ENCODE measurements at regions of chr7 and their contacts with region 1.

Region 1: DNA sequence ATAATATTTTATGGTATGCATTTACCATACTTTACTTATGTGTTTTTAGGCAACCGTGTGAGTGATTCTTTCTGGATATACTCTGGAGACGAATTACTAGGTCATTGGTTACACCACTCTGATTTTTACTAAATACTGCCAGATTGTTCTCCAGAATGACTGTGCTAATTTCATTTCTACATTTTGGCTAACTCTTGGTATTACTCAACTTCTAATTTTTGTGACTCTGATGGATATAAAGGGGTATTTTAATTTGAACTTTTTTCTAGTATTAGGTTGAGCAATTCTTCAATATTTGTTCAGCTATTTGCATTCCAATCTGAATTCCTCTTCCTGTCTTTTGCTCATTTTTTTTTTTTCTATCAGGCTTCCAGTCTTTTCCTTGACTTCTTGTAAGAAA is 223.6 kb downstream of the MDFIC start:
- DNase-seq: peak in 1 of 2 experiments; percentile 87
- H3K4me3 ChIP-seq: peak overlapping the region; percentile 40; the same call in 1 of the 2 replicates
- H3K27ac ChIP-seq: peak overlapping the region; percentile 95
- H3K4me1 ChIP-seq: peaks cover 34% of the 10 kb centered on the region
- H3K27me3 ChIP-seq: no peaks in the 10 kb centered on the region
- CTCF ChIP-seq: no peak

Region 2: GRCh38 chr7:114901781-114902180 is 243.7 kb before region 1 on chr7:
- CTCF ChIA-PET with region 1: interaction called, 4 read pairs
- POLR2A ChIA-PET with region 1: no interaction called
- intact Hi-C with region 1: loop called (anchors 1 kb)
- DNase-seq: peak; percentile 79 to 88
- H3K4me3 ChIP-seq: 0 out of 2 replicates have a peak overlapping the region, but pooled peaks have one; percentile 12
- H3K27ac ChIP-seq: peak overlapping the region; percentile 22
- H3K4me1 ChIP-seq: peaks cover 17% of the 10 kb centered on the region
- H3K27me3 ChIP-seq: no peaks in the 10 kb centered on the region
- CTCF ChIP-seq: no peak

Region 3: DNA sequence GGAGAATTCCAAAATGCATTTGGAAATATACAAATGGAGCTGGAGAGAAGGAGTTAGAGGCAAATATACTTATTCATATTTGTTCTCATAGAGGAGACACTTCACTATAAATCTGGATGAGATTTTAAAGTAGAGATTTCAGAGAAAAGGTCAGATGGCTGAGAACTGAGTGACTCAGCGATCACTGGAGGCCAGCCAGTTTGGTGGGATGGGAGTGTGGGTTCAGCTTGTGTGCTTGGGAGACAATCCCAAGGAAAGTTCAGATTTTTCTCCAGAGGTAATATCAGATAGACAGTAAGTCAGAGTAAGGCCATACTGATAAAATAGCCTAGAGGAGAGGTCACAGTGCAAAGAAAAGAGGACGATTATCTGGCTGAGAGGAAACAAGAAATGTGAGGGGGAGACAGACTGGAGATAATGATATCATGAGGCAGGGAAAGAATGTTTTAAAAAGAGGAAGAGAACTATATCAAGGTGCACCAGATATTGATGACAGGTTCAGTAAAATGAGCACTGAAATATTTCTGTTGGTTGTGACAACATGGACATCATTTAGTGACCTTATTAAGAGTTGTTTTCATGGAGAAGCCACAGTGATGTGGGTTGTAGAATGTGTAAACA is 156.6 kb before region 1 on chr7:
- CTCF ChIA-PET with region 1: no interaction called
- POLR2A ChIA-PET with region 1: no interaction called
- intact Hi-C with region 1: loop called (anchors 5 kb)
- DNase-seq: peak in 1 of 2 experiments; percentile 61
- H3K4me3 ChIP-seq: no peak overlapping the region
- H3K27ac ChIP-seq: peak overlapping the region; percentile 40
- H3K4me1 ChIP-seq: peaks cover 16% of the 10 kb centered on the region
- H3K27me3 ChIP-seq: no peaks in the 10 kb centered on the region
- CTCF ChIP-seq: no peak

Region 4: GRCh38 chr7:115037128-115037802 is 108.2 kb before region 1 on chr7:
- CTCF ChIA-PET with region 1: no interaction called
- POLR2A ChIA-PET with region 1: no interaction called
- intact Hi-C with region 1: loop called (anchors 5 kb)
- DNase-seq: no peak
- H3K4me3 ChIP-seq: no peak overlapping the region
- H3K27ac ChIP-seq: no peak overlapping the region
- H3K4me1 ChIP-seq: 0 out of 2 replicates have a peak, but pooled peaks cover 7% of the 10 kb centered on the region
- H3K27me3 ChIP-seq: no peaks in the 10 kb centered on the region
- CTCF ChIP-seq: no peak

Region 5: DNA sequence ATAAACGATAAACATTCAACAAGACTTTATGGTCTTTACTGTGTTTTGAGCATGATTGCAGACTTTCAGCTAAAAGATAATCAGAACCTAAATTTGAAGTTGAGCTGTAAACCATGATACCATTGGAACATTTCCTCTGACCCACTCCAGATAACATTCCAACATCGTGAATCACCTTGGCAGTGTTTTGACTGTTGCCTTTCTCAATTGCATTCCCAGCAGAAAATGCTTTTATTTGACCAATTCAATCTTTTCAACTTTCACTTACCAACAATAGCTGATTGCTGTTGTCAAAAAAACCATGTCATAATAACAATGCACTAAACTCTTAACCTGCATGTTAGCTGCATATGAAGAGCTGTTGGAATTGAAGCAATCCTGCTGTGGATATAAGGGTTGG is 58.1 kb before region 1 on chr7:
- CTCF ChIA-PET with region 1: no interaction called
- POLR2A ChIA-PET with region 1: no interaction called
- intact Hi-C with region 1: loop called (anchors 1 kb)
- DNase-seq: peak; percentile 51 to 63
- H3K4me3 ChIP-seq: 0 out of 2 replicates have a peak overlapping the region, but pooled peaks have one; percentile 10
- H3K27ac ChIP-seq: peak overlapping the region; percentile 49
- H3K4me1 ChIP-seq: peaks cover 28% of the 10 kb centered on the region
- H3K27me3 ChIP-seq: no peaks in the 10 kb centered on the region
- CTCF ChIP-seq: no peak

Region 6: GRCh38 chr7:115127399-115128021 is 18.0 kb before region 1 on chr7:
- CTCF ChIA-PET with region 1: no interaction called
- POLR2A ChIA-PET with region 1: interaction called, 6 read pairs
- intact Hi-C with region 1: loop called (anchors 1 kb)
- DNase-seq: peak; percentile 5 to 47
- H3K4me3 ChIP-seq: no peak overlapping the region
- H3K27ac ChIP-seq: no peak overlapping the region
- H3K4me1 ChIP-seq: peaks cover 5% of the 10 kb centered on the region; the same call in 1 of the 2 replicates
- H3K27me3 ChIP-seq: no peaks in the 10 kb centered on the region
- CTCF ChIP-seq: no peak

Region 7: GRCh38 chr7:115230882-115231571 is 85.5 kb after region 1 on chr7:
- CTCF ChIA-PET with region 1: no interaction called
- POLR2A ChIA-PET with region 1: no interaction called
- intact Hi-C with region 1: loop called (anchors 1 kb)
- DNase-seq: peak; percentile 50 to 93
- H3K4me3 ChIP-seq: no peak overlapping the region
- H3K27ac ChIP-seq: peak overlapping the region; percentile 80
- H3K4me1 ChIP-seq: peaks cover 23% of the 10 kb centered on the region
- H3K27me3 ChIP-seq: no peaks in the 10 kb centered on the region
- CTCF ChIP-seq: no peak

Region 8: DNA sequence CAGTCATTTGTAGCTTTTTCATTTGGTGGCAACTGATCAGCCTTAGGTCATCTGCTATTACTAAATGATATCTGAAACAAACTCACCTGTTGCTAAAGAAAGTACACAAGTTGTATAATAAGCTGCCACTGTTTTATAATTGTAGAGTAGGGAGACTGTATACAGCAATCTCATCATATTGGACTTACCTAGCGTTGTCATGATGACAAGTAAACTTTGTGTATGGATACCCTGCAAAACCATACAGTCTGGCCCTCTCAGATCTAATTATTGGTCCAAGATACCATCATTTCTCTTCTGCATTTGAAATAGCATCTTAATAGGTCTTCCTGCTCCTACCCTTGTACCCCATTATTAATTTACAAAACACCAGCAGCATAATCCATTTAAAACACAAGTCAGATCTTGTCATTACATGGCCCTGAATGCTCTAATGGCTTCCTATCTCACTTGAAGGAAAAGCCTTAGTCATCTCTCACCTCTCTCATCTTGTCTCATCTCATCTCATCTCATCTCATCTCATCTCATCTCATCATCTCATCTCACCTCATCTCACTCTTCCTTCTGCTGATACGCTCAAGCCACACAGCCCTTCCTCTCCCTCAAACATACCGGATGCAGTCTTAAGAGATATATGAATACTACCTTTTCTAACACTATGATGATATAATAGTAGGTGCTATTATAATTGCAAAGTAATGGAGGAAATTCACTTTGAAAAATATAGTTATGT is 317.0 kb after region 1 on chr7:
- CTCF ChIA-PET with region 1: no interaction called
- POLR2A ChIA-PET with region 1: no interaction called
- intact Hi-C with region 1: no loop called
- DNase-seq: no peak
- H3K4me3 ChIP-seq: no peak overlapping the region
- H3K27ac ChIP-seq: no peak overlapping the region
- H3K4me1 ChIP-seq: no peaks in the 10 kb centered on the region
- H3K27me3 ChIP-seq: no peaks in the 10 kb centered on the region
- CTCF ChIP-seq: no peak